ENCODE measurements at regions of chr2 and their contacts with region 1.

Region 1: GRCh38 chr2:196068271-196069209 is at the start of gene DNAH7:
- DNase-seq: peak; percentile 89
- H3K4me3 ChIP-seq: peak within 1 kb of the TSS; percentile 71
- H3K27ac ChIP-seq: no peak within 1 kb of the TSS
- H3K4me1 ChIP-seq: peaks cover 10% of the 10 kb centered on the region
- H3K27me3 ChIP-seq: no peaks in the 10 kb centered on the region
- CTCF ChIP-seq: peak; percentile 88
- total RNA-seq, gene DNAH7: 0.95 and 1.9 TPM in 2 replicates

Region 2: DNA sequence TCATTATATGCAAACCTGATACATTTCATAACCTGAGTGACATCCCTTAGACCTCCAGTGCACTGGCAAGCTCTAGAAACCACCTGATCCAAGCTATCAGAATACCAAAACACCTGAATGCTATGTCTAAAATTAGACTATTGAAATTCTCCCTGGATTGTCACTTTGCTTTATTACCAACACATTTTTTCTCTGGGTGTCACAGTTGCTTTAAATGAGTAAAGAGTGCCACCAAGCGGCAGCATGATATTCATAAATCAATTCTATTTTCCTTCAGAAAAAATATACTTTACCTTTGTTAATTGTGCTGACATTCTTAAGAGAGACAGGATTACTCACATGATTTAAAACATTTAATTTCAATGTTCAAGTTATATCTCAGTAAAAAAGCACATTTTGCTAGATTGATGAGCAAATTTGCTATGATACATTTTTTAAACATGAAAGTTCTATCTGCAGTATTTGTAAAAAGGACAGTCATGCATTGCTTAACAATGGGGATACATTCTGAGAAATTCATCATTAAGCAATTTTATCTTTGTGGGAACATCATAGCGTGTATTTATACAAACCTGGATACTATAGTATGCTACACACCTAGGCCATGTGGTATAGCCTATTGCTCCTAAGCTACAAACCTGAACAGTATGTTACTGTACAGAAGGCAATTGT is 750.0 kb before region 1 on chr2:
- CTCF ChIA-PET with region 1: no interaction called
- POLR2A ChIA-PET with region 1: no interaction called
- intact Hi-C with region 1: loop called (anchors 5 kb)
- DNase-seq: peak; percentile 68
- H3K4me3 ChIP-seq: no peak overlapping the region
- H3K27ac ChIP-seq: no peak overlapping the region
- H3K4me1 ChIP-seq: peaks cover 9% of the 10 kb centered on the region
- H3K27me3 ChIP-seq: no peaks in the 10 kb centered on the region
- CTCF ChIP-seq: peak; percentile 76

Region 3: DNA sequence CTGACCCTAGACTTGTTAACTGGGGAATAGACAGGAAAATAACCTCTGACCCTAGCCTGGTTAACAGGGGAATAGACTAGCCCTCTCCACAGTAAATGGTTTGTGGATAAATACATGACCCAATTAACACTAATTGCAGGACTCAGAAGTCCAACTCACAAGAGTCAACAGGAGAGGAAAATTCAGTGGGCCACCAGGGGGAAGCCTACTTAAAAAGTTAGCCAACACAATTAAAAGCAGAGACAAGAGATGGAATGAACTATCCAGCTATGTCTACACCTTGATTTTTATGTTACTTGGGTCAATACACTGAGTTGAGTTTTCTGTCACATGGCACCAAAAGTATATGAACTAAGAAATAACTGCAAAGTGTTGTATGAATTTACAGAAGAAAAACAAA is 570.4 kb before region 1 on chr2:
- CTCF ChIA-PET with region 1: no interaction called
- POLR2A ChIA-PET with region 1: no interaction called
- intact Hi-C with region 1: loop called (anchors 10 kb)
- DNase-seq: peak; percentile 36
- H3K4me3 ChIP-seq: no peak overlapping the region
- H3K27ac ChIP-seq: no peak overlapping the region
- H3K4me1 ChIP-seq: peaks cover 13% of the 10 kb centered on the region
- H3K27me3 ChIP-seq: no peaks in the 10 kb centered on the region
- CTCF ChIP-seq: peak; percentile 52

Region 4: DNA sequence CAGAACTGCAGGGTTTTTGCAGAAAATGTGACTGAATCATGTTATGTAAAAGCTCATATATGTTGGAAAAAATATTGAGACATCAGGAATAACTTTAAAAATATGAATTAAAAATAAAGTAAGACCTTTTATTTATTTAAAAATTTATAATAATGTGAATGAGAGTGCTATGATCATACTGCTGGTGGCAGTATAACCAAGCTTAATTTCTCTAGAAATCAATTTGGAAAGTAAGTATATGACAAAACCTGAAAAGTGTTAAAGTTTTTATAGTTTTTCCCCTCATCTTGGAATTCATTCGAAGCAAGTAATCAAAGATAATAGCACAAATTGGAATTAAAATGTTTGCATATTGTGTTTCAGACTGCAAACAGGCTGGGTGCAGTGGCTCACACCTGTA is 404.0 kb before region 1 on chr2:
- CTCF ChIA-PET with region 1: interaction called, 5 read pairs
- POLR2A ChIA-PET with region 1: no interaction called
- intact Hi-C with region 1: loop called (anchors 2 kb)
- DNase-seq: no peak
- H3K4me3 ChIP-seq: no peak overlapping the region
- H3K27ac ChIP-seq: no peak overlapping the region
- H3K4me1 ChIP-seq: peaks cover 17% of the 10 kb centered on the region
- H3K27me3 ChIP-seq: no peaks in the 10 kb centered on the region
- CTCF ChIP-seq: peak; percentile 52; the same call in 1 of the 2 replicates

Region 5: GRCh38 chr2:195937176-195937575 is 131.4 kb before region 1 on chr2:
- CTCF ChIA-PET with region 1: interaction called, 4 read pairs
- POLR2A ChIA-PET with region 1: no interaction called
- intact Hi-C with region 1: loop called (anchors 5 kb)
- DNase-seq: no peak
- H3K4me3 ChIP-seq: no peak overlapping the region
- H3K27ac ChIP-seq: no peak overlapping the region
- H3K4me1 ChIP-seq: no peaks in the 10 kb centered on the region
- H3K27me3 ChIP-seq: no peaks in the 10 kb centered on the region
- CTCF ChIP-seq: no peak

Measured in A673 (cell line).